Ascending aorta (tissue), 2 donors: ENCODE measurements at regions of chr1 and their contacts with region 1.

Region 1: GRCh38 chr1:207393610-207394009 is 60.5 kb upstream of the CR2 start:
- DNase-seq: no peak
- H3K4me3 ChIP-seq: no peak overlapping the region
- H3K27ac ChIP-seq: no peak overlapping the region
- H3K4me1 ChIP-seq: no peaks in the 10 kb centered on the region
- H3K27me3 ChIP-seq: no peaks in the 10 kb centered on the region
- CTCF ChIP-seq: no peak

Region 2: GRCh38 chr1:207240325-207241095 is 153.1 kb before region 1 on chr1:
- intact Hi-C with region 1: loop called (anchors 10 kb)
- DNase-seq: no peak
- H3K4me3 ChIP-seq: no peak overlapping the region
- H3K27ac ChIP-seq: no peak overlapping the region
- H3K4me1 ChIP-seq: no peaks in the 10 kb centered on the region
- H3K27me3 ChIP-seq: no peaks in the 10 kb centered on the region
- CTCF ChIP-seq: no peak